B cell (primary cell): ENCODE measurements at regions of chr1 and their contacts with region 1.

Region 1: GRCh38 chr1:110338886-110339406 is at the start of gene RBM15:
- DNase-seq: peak; percentile 100
- ATAC-seq: peak; percentile 73
- H3K4me3 ChIP-seq: peak within 1 kb of the TSS; percentile 61 to 100 (median 98)
- H3K4me3 Mint-ChIP-seq: no peak within 1 kb of the TSS
- H3K27ac ChIP-seq: peak within 1 kb of the TSS; percentile 95 to 97
- H3K27ac Mint-ChIP-seq: no peak within 1 kb of the TSS
- H3K4me1 ChIP-seq: peaks cover 43 to 44% of the 10 kb centered on the region in 2 donors
- H3K4me1 Mint-ChIP-seq: peaks cover 51% of the 10 kb centered on the region
- H3K27me3 ChIP-seq: no peaks in the 10 kb centered on the region
- H3K27me3 Mint-ChIP-seq: no peaks in the 10 kb centered on the region
- CTCF ChIP-seq: no peak
- total RNA-seq, gene RBM15: 97.7 and 102 TPM in 2 replicates

Region 2: GRCh38 chr1:110203021-110203661 is 135.8 kb before region 1 on chr1:
- CTCF ChIA-PET with region 1: interaction called, 121 read pairs
- POLR2A ChIA-PET with region 1: interaction called, 8 read pairs
- intact Hi-C with region 1: no loop called
- DNase-seq: peak; percentile 84
- ATAC-seq: peak; percentile 71
- H3K4me3 ChIP-seq: no peak overlapping the region
- H3K4me3 Mint-ChIP-seq: no peak overlapping the region
- H3K27ac ChIP-seq: no peak overlapping the region
- H3K27ac Mint-ChIP-seq: no peak overlapping the region
- H3K4me1 ChIP-seq: peaks cover 3 to 7% of the 10 kb centered on the region in 2 donors
- H3K4me1 Mint-ChIP-seq: peaks cover 11% of the 10 kb centered on the region
- H3K27me3 ChIP-seq: no peaks in the 10 kb centered on the region
- H3K27me3 Mint-ChIP-seq: no peaks in the 10 kb centered on the region
- CTCF ChIP-seq: peak; percentile 91

Region 3: DNA sequence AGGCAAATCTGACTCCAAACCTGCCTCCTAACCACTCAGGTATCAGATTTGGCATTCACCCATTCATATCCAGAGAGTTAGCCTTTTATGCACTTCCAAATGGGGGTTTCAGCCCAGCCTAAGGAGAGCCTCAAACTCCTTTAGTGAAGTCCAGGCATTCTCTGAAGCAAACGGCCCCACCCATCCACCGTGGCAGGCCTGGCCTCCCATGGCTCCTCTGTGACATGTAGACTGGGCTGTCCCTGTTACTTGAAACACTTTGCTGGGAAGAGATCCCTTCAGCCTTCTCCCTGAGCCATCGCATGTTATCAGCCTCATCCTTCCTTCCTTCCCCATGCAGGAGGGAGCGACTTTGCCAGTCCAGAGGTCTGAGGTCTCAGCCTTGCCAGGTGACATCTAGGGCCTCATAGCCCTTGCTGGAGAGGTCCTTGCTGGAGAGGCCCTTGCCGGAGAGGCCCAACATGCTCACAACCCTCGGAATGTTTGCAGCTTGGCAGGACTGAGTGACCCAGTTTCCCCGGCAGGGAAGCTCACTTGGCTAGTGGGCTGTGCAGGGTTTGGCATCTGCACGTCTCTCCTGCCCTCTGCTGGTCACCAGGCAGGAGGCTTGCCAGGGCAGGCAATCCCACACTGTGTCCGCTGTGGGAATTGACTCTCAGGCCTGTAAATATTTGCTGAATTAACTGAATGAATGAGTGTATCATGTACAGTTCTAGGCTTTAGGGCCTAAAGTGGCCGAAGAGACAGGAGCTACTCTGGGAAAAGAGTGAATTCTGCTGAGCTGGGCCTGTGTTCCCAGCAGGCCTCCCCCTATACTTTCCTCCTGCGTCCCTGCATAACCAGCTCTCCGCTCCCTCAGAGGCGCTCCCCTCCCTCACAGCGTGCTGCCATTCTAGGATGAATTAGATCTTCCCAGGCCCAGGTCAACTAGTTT is 26.5 kb before region 1 on chr1:
- CTCF ChIA-PET with region 1: interaction called, 58 read pairs
- POLR2A ChIA-PET with region 1: interaction called, 3 read pairs
- intact Hi-C with region 1: loop called (anchors 1 kb)
- DNase-seq: peak; percentile 81
- ATAC-seq: peak; percentile 95
- H3K4me3 ChIP-seq: no peak overlapping the region
- H3K4me3 Mint-ChIP-seq: no peak overlapping the region
- H3K27ac ChIP-seq: no peak overlapping the region
- H3K27ac Mint-ChIP-seq: no peak overlapping the region
- H3K4me1 ChIP-seq: peaks cover 0 to 4% of the 10 kb centered on the region in 2 donors
- H3K4me1 Mint-ChIP-seq: no peaks in the 10 kb centered on the region
- H3K27me3 ChIP-seq: no peaks in the 10 kb centered on the region
- H3K27me3 Mint-ChIP-seq: no peaks in the 10 kb centered on the region
- CTCF ChIP-seq: peak; percentile 89

Region 4: DNA sequence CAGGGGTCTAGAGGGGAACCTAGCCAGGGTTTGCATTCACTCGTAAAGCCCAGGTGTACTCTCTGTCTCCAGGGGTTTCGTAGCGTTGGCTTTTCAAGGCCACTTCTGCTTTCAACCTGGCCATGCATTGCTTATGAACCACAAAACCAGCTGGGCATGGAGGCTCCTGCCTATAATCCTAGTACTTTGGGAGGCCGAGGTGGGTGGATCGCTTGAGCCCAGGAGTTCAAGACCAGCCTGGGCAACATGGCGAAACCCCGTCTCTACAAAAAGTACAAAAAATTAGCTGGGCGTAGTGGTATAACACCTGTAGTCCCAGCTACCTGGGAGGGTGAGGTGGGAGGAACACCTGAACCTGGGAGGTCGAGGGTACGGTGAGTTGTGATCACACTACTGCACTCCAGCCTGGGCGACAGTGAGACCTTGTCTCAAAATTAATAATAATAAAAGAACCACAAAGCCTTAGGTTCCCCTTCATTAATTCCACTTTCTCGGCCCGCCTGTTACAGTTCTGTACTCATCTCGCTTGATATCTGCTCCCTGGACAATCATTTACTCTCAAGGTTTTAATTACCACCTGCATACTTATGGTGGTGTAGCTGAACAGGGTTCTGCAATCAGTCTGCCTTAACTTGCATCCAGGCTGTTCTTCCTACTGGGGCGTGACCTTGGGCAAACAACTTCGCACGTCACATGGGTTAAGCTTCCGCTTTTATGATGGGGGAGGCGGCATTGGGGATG is 45.8 kb after region 1 on chr1:
- CTCF ChIA-PET with region 1: interaction called, 139 read pairs
- POLR2A ChIA-PET with region 1: interaction called, 84 read pairs
- intact Hi-C with region 1: loop called (anchors 1 kb)
- DNase-seq: peak; percentile 91
- ATAC-seq: peak; percentile 77
- H3K4me3 ChIP-seq: peak overlapping the region; percentile 34 to 49 (median 42)
- H3K4me3 Mint-ChIP-seq: peak overlapping the region; percentile 78
- H3K27ac ChIP-seq: peak overlapping the region; percentile 87 to 98
- H3K27ac Mint-ChIP-seq: peak overlapping the region; percentile 90
- H3K4me1 ChIP-seq: peaks cover 61 to 79% of the 10 kb centered on the region in 2 donors
- H3K4me1 Mint-ChIP-seq: peaks cover 76% of the 10 kb centered on the region
- H3K27me3 ChIP-seq: no peaks in the 10 kb centered on the region
- H3K27me3 Mint-ChIP-seq: no peaks in the 10 kb centered on the region
- CTCF ChIP-seq: no peak

Region 5: DNA sequence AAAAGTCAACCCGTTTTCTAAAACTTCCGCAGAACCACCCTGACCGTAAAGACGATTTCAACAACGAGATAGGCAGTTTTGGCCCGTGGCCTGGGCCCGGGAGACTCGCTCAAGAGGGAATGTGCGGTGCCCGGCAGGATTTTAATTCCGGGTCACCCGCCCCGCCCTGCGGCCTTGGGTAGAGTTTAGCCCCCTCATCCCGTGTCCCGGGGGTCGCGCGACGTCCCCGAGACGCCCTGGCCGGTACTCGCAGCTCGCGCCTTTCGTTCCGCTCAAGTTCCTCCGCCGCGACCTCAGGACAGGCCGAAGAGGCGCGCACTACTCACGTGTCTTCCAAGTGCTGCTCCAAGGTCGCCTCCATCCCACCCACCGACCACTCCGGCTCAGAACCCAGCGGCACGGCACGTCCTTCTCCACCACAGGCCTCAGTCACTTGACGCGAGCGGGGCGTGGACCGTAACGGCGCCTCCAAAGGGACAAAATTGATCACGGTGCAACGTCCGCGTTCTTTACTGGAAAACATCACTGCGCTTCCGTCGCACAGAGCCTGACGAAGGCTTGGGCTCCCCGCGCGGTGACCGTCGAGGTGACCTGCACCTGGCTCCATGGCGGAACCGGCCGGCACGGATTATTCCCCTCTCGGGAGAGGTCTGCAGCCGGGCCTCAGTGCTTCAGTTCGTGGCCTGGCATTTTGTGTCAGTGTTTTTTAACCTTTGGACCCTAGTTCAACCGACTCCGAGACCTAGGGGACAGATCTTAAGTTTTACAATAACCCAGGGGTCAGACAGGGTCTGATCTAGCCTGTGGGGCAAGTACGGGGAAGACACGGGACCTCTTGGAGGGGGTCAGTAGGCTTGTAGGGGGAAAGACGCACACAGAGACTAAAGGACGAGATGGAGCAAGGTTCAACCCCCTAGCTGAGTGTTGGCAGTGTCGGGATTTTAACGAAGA is 68.6 kb after region 1 on chr1 and contains the start of gene LAMTOR5:
- CTCF ChIA-PET with region 1: interaction called, 257 read pairs
- POLR2A ChIA-PET with region 1: interaction called, 37 read pairs
- intact Hi-C with region 1: loop called (anchors 1 kb)
- DNase-seq: peak; percentile 94
- ATAC-seq: peak; percentile 92
- H3K4me3 ChIP-seq: peak within 1 kb of the TSS; percentile 76 to 99 (median 90)
- H3K4me3 Mint-ChIP-seq: peak within 1 kb of the TSS; percentile 100
- H3K27ac ChIP-seq: peak within 1 kb of the TSS; percentile 87 to 90
- H3K27ac Mint-ChIP-seq: peak within 1 kb of the TSS; percentile 99
- H3K4me1 ChIP-seq: peaks cover 18 to 23% of the 10 kb centered on the region in 2 donors
- H3K4me1 Mint-ChIP-seq: peaks cover 25% of the 10 kb centered on the region
- H3K27me3 ChIP-seq: no peaks in the 10 kb centered on the region
- H3K27me3 Mint-ChIP-seq: no peaks in the 10 kb centered on the region
- CTCF ChIP-seq: peak; percentile 23
- total RNA-seq, gene LAMTOR5: 145 and 151 TPM in 2 replicates

Region 6: GRCh38 chr1:110872745-110873720 is 534.1 kb after region 1 on chr1 and contains the start of gene CD53:
- CTCF ChIA-PET with region 1: no interaction called
- POLR2A ChIA-PET with region 1: no interaction called
- intact Hi-C with region 1: loop called (anchors 10 kb)
- DNase-seq: peak; percentile 92
- ATAC-seq: peak; percentile 66
- H3K4me3 ChIP-seq: peak within 1 kb of the TSS; percentile 73 to 100 (median 97)
- H3K4me3 Mint-ChIP-seq: peak within 1 kb of the TSS; percentile 99
- H3K27ac ChIP-seq: peak within 1 kb of the TSS; percentile 96 to 99
- H3K27ac Mint-ChIP-seq: peak within 1 kb of the TSS; percentile 99
- H3K4me1 ChIP-seq: peaks cover 60% of the 10 kb centered on the region in 2 donors
- H3K4me1 Mint-ChIP-seq: peaks cover 70% of the 10 kb centered on the region
- H3K27me3 ChIP-seq: no peaks in the 10 kb centered on the region
- H3K27me3 Mint-ChIP-seq: no peaks in the 10 kb centered on the region
- CTCF ChIP-seq: no peak
- total RNA-seq, gene CD53: 490 and 495 TPM in 2 replicates